Activated CD4-positive, alpha-beta T cell treated with anti-CD3 and anti-CD28 coated beads, Interleukin-2, amount 10 ng/mL, durations not matched to agents 7 days and 5 days (primary cell): ENCODE measurements at regions of chr11 and their contacts with region 1.

Region 1: GRCh38 chr11:33703771-33704170 is 3.1 kb upstream of the C11orf91 start:
- DNase-seq: no peak
- H3K4me3 Mint-ChIP-seq: no peak overlapping the region
- H3K27ac Mint-ChIP-seq: no peak overlapping the region
- H3K4me1 Mint-ChIP-seq: peaks cover 30% of the 10 kb centered on the region
- H3K27me3 Mint-ChIP-seq: peaks cover 5% of the 10 kb centered on the region

Region 2: GRCh38 chr11:33674035-33674814 is 29.5 kb before region 1 on chr11:
- CTCF ChIA-PET with region 1: no interaction called
- POLR2A ChIA-PET with region 1: no interaction called
- DNase-seq: no peak
- H3K4me3 Mint-ChIP-seq: no peak overlapping the region
- H3K27ac Mint-ChIP-seq: no peak overlapping the region
- H3K4me1 Mint-ChIP-seq: no peaks in the 10 kb centered on the region
- H3K27me3 Mint-ChIP-seq: peaks cover 34% of the 10 kb centered on the region

Region 3: DNA sequence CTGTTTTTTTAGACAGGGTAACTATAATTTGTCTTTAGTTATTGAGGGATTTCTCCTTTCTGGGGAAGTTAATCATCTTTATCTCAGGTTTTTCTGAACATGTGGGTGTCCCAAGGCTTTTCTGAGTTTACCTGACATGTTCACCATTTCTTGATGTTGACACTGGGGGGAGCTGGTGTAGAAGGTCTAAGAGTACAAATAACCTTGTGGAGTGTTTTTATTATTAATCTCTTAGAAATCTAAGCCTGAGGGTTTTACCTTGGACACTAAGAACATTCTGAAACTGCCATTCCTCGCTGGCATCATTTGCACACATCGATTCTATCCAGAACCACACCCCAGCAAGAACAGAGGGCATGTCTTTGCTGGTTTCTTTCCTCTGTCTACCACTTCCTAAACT is 12.5 kb after region 1 on chr11:
- CTCF ChIA-PET with region 1: interaction called, 22 read pairs
- POLR2A ChIA-PET with region 1: no interaction called
- DNase-seq: peak; percentile 25
- H3K4me3 Mint-ChIP-seq: no peak overlapping the region
- H3K27ac Mint-ChIP-seq: no peak overlapping the region
- H3K4me1 Mint-ChIP-seq: peaks cover 10% of the 10 kb centered on the region
- H3K27me3 Mint-ChIP-seq: no peaks in the 10 kb centered on the region

Region 4: GRCh38 chr11:33779849-33780528 is 76.2 kb after region 1 on chr11:
- CTCF ChIA-PET with region 1: no interaction called
- POLR2A ChIA-PET with region 1: no interaction called
- DNase-seq: no peak
- H3K4me3 Mint-ChIP-seq: no peak overlapping the region
- H3K27ac Mint-ChIP-seq: no peak overlapping the region
- H3K4me1 Mint-ChIP-seq: peaks cover 7% of the 10 kb centered on the region
- H3K27me3 Mint-ChIP-seq: peaks cover 34% of the 10 kb centered on the region